Right cardiac atrium (tissue), 5 donors: ENCODE measurements at regions of chr1 and their contacts with region 1.

Region 1: GRCh38 chr1:87335175-87335884 is 6.7 kb downstream of the LMO4 start:
- DNase-seq: peak; percentile 83 to 90 (median 90)
- ATAC-seq: peak; percentile 71 to 84
- H3K4me3 ChIP-seq: peak overlapping the region; percentile 87
- H3K27ac ChIP-seq: peak overlapping the region; percentile 57
- H3K4me1 ChIP-seq: peaks cover 6% of the 10 kb centered on the region
- H3K27me3 ChIP-seq: no peaks in the 10 kb centered on the region

Region 2: DNA sequence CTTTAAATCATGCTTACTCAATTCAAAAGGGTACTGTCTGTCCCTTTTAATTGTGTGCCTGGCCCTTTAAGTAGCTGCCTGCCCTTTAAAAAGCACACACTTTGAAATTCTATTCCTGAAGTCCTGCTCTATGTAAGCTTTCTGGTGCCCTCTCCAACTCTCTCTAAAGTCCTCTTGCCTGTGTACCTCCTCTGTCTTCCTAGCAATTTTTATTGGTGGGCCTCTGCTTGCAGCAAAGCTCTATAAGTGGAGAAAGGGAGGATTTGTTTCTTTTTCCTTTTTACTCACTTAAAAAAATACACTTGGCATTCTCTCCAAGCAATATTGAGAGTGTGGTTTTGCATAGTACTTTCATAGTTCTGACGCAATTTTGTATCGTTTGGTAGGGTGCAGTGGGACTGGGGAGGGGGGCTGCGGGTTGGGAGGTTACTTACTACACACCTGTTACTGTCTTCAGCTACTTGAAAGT is 128.7 kb after region 1 on chr1:
- intact Hi-C with region 1: loop called in 1 of 4 experiments (anchors 10 kb)
- DNase-seq: no peak
- ATAC-seq: peak; percentile 66 to 77
- H3K4me3 ChIP-seq: no peak overlapping the region
- H3K27ac ChIP-seq: no peak overlapping the region
- H3K4me1 ChIP-seq: no peaks in the 10 kb centered on the region
- H3K27me3 ChIP-seq: no peaks in the 10 kb centered on the region

Region 3: DNA sequence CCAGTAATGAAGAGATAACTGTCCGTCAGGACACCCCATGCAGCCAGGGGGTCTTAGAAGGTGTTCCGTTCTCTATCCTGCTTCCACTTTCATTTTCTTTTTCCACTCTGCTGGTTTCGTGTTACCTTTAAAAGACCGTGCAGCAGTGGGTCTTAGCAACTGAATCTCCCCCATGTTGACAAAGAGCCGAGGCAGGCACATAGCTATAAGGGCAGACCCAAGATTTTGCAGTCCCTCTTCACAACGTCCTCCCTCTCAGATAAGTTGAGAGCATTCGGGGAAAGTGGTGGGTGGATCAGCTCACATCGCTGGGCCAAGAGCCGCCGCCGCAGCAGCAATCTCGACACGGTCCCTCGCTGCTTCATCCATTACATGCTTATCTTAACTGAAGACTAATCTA is 348.9 kb after region 1 on chr1:
- intact Hi-C with region 1: loop called in 1 of 4 experiments (anchors 10 kb)
- DNase-seq: peak; percentile 20 to 68 (median 54)
- ATAC-seq: peak; percentile 70
- H3K4me3 ChIP-seq: peak overlapping the region; percentile 83
- H3K27ac ChIP-seq: peak overlapping the region; percentile 81
- H3K4me1 ChIP-seq: peaks cover 2% of the 10 kb centered on the region
- H3K27me3 ChIP-seq: no peaks in the 10 kb centered on the region